Naive thymus-derived CD4-positive, alpha-beta T cell (primary cell): ENCODE measurements at regions of chr7 and their contacts with region 1.

Region 1: DNA sequence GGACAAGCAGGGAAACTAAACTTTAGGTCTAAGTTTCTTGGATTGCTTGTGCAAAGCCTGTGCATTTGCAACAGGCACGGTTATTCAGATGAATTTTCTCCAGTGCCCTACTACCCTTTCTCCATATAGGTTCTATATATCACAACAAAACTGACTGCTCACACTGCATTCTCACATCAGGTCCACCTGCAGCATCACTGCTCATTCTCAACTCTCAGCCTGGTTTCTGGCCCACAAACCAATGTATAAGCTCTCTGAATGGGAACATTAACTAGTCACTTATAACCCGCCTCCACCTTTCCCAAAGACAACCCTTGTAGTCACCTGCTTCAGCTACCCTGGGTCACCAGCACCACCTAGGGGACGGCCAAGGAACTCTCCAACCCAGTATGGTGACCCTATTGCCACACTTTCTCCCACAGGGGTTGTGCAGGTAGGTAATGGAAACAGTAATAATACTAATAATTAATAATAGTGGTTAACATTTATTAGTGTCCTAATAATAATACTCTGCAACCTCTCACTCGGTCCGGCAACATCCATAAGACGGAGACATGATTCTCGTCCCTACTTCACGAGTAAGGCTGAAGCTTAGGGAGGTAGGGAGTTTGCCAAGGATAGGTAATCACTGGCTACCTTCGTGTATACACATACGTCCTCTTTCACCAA is 97.3 kb downstream of the CLEC2L start:
- DNase-seq: peak in 8 of 9 donors; percentile 27 to 58 (median 54)
- ATAC-seq: peak; percentile 86
- H3K4me3 ChIP-seq: no peak overlapping the region
- H3K4me3 Mint-ChIP-seq: peak overlapping the region in 1 of 10 donors; percentile 10
- H3K27ac ChIP-seq: no peak overlapping the region
- H3K27ac Mint-ChIP-seq: peak overlapping the region in 6 of 9 donors; percentile 0 to 82 (median 42)
- H3K4me1 ChIP-seq: peaks cover 0 to 8% of the 10 kb centered on the region in 2 donors
- H3K4me1 Mint-ChIP-seq: peaks cover 16 to 47% (median 36%) of the 10 kb centered on the region in 7 donors
- H3K27me3 ChIP-seq: no peaks in the 10 kb centered on the region
- H3K27me3 Mint-ChIP-seq: no peaks in the 10 kb centered on the region

Region 2: DNA sequence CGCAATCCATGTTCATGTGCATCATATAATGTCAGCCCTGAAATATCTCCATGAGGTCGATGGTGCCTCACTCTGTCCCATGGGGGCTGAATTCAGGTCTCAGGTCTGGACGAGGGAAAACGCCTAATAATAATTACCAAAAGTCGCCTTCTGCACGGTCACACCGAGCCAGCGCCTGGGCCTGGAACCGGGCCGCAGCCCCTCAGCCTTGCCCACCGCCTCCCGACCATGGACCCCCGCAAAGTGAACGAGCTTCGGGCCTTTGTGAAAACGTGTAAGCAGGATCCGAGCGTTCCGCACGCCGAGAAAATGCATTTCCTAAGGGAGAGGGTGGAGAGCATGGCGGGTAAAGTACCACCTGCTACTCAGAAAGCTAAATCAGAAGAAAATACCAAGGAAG is 118.6 kb before region 1 on chr7:
- CTCF ChIA-PET with region 1: interaction called, 3 read pairs
- POLR2A ChIA-PET with region 1: no interaction called
- intact Hi-C with region 1: loop called (anchors 2 to 5 kb)
- DNase-seq: no peak
- ATAC-seq: no peak
- H3K4me3 ChIP-seq: no peak overlapping the region
- H3K4me3 Mint-ChIP-seq: no peak overlapping the region
- H3K27ac ChIP-seq: no peak overlapping the region
- H3K27ac Mint-ChIP-seq: no peak overlapping the region
- H3K4me1 ChIP-seq: no peaks in the 10 kb centered on the region
- H3K4me1 Mint-ChIP-seq: peaks cover 2 to 9% (median 5%) of the 10 kb centered on the region in 7 donors
- H3K27me3 ChIP-seq: no peaks in the 10 kb centered on the region
- H3K27me3 Mint-ChIP-seq: peaks cover 0 to 19% (median 5%) of the 10 kb centered on the region in 5 donors

Region 3: DNA sequence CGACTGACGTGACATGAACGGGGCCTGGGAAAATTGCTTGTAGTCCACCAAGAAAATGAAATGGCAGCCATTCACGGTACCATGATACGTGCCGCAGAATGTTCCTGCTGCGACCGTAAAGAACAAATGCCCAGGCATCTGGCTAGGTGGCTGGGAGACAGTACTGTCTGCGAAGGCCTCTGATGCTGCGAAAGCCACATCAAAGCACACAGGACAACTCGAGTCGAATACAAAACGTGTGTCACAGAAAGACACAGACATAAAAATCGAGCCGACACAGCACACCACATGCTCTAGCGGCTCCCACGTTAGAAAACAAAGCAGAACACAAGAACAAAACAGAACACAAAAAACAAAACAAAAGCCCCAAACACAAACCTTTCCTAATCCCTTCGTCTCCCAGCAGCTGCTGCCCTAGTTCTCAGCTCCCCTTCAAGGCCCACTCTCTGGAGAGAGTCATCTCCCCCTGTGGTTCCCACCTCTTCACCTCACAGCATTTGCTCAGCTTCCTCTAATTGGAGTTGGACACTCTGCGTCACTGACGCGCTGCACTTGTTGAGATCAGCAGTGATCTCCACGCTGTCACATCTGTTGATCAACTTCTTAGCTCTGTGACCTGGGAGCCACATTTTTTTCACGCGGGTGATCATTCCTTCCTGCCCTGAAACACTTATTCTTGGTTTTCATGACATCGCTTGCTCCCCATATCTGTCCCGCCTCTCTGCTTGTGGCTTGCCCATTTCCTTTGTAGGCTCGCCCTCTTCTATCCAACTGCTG is 14.9 kb after region 1 on chr7:
- CTCF ChIA-PET with region 1: interaction called, 31 read pairs
- POLR2A ChIA-PET with region 1: interaction called, 5 read pairs
- intact Hi-C with region 1: loop called in 1 of 2 experiments (anchors 1 kb)
- DNase-seq: peak; percentile 45 to 94 (median 91)
- ATAC-seq: peak; percentile 95
- H3K4me3 ChIP-seq: peak overlapping the region; percentile 31
- H3K4me3 Mint-ChIP-seq: peak overlapping the region; percentile 64 to 92 (median 84)
- H3K27ac ChIP-seq: peak overlapping the region; percentile 78
- H3K27ac Mint-ChIP-seq: peak overlapping the region; percentile 90 to 99 (median 98)
- H3K4me1 ChIP-seq: peaks cover 4 to 53% of the 10 kb centered on the region in 2 donors
- H3K4me1 Mint-ChIP-seq: peaks cover 46 to 92% (median 80%) of the 10 kb centered on the region in 7 donors
- H3K27me3 ChIP-seq: no peaks in the 10 kb centered on the region
- H3K27me3 Mint-ChIP-seq: no peaks in the 10 kb centered on the region

Region 4: GRCh38 chr7:140003913-140004382 is 383.1 kb after region 1 on chr7:
- CTCF ChIA-PET with region 1: interaction called, 28 read pairs
- POLR2A ChIA-PET with region 1: no interaction called
- intact Hi-C with region 1: loop called (anchors 1 kb)
- DNase-seq: peak in 7 of 9 donors; percentile 17 to 42 (median 33)
- ATAC-seq: peak; percentile 37
- H3K4me3 ChIP-seq: no peak overlapping the region
- H3K4me3 Mint-ChIP-seq: no peak overlapping the region
- H3K27ac ChIP-seq: no peak overlapping the region
- H3K27ac Mint-ChIP-seq: peak overlapping the region in 1 of 9 donors; percentile 80
- H3K4me1 ChIP-seq: no peaks in the 10 kb centered on the region
- H3K4me1 Mint-ChIP-seq: peaks cover 0 to 6% (median 0%) of the 10 kb centered on the region in 7 donors
- H3K27me3 ChIP-seq: no peaks in the 10 kb centered on the region
- H3K27me3 Mint-ChIP-seq: no peaks in the 10 kb centered on the region

Region 5: GRCh38 chr7:140209866-140210609 is 589.2 kb after region 1 on chr7:
- CTCF ChIA-PET with region 1: no interaction called
- POLR2A ChIA-PET with region 1: no interaction called
- intact Hi-C with region 1: no loop called
- DNase-seq: peak in 6 of 9 donors; percentile 24 to 58 (median 34)
- ATAC-seq: peak; percentile 86
- H3K4me3 ChIP-seq: peak overlapping the region; percentile 29
- H3K4me3 Mint-ChIP-seq: peak overlapping the region; percentile 10 to 82 (median 68)
- H3K27ac ChIP-seq: no peak overlapping the region
- H3K27ac Mint-ChIP-seq: peak overlapping the region; percentile 66 to 96 (median 87)
- H3K4me1 ChIP-seq: peaks cover 17 to 36% of the 10 kb centered on the region in 2 donors
- H3K4me1 Mint-ChIP-seq: peaks cover 37 to 82% (median 58%) of the 10 kb centered on the region in 7 donors
- H3K27me3 ChIP-seq: no peaks in the 10 kb centered on the region
- H3K27me3 Mint-ChIP-seq: no peaks in the 10 kb centered on the region